ENCODE measurements at regions of chr5 and their contacts with region 1.

Region 1: GRCh38 chr5:139711067-139711905 is 63.1 kb downstream of the CXXC5 start:
- DNase-seq: peak; percentile 82
- H3K4me3 ChIP-seq: peak overlapping the region; percentile 55 to 67
- H3K27ac ChIP-seq: peak overlapping the region; percentile 95 to 99
- H3K4me1 ChIP-seq: peaks cover 21 to 48% of the 10 kb centered on the region in 2 experiments
- H3K27me3 ChIP-seq: no peaks in the 10 kb centered on the region
- CTCF ChIP-seq: peak; percentile 38
- EP300 ChIP-seq: peak in 1 of 2 experiments; percentile 29; a peak in 1 of 4 replicates
- RAD21 ChIP-seq: peak; percentile 8; the same call in 1 of the 2 replicates

Region 2: DNA sequence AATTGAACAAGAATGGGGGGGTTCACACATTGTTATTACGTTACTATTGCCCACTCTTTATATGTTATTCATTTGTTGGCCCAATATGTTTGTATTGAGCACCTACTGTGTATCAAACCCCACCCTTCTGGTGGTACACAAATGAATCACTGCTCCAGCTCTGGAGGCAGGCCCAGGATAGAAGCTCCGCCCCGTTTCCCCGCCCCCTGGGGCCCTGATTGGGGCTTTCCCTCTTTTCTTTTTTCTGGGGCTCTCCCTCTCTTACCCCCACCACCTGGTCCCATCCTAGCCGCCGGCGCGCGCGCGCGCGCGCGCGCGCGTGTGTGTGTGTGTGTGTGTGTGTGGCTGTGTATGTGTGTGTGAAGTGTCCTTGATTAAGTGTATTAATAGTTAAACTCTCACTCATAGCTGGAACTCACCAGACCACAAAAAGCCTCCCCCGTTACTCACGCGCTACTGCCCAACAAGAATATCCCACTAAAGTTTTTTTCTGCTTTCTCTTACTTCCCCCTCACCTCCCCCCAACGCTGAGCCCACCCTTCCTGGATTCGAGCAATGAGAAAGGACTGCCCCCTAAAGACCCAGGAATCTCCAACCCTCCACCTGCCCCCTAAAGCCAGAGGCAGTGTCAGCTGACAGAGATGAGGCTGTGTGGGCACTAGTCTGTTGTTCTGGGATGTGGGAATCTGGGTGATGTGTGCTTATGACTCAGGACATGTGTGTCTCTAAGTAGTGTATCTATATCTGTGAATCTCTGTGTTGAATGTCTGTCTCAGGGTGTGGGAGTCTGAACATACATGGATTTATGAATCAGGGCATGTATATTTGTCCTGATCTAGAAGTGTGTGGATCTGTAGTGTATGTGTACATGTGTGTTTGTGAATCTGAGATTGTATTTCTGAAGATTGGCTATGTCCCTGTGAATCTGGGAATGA is 59.2 kb before region 1 on chr5:
- CTCF ChIA-PET with region 1: interaction called, 32 read pairs
- POLR2A ChIA-PET with region 1: interaction called, 32 read pairs
- DNase-seq: peak; percentile 89
- H3K4me3 ChIP-seq: peak overlapping the region; percentile 19 to 91; a peak in 3 of 4 replicates
- H3K27ac ChIP-seq: peak overlapping the region; percentile 78 to 96
- H3K4me1 ChIP-seq: peaks cover 54 to 66% of the 10 kb centered on the region in 2 experiments
- H3K27me3 ChIP-seq: no peaks in the 10 kb centered on the region
- CTCF ChIP-seq: no peak
- EP300 ChIP-seq: 0 out of 4 replicates have a peak, but pooled peaks of 1 of the 2 experiments have one; percentile 10
- RAD21 ChIP-seq: no peak

Region 3: GRCh38 chr5:139670369-139671095 is 40.8 kb before region 1 on chr5:
- CTCF ChIA-PET with region 1: interaction called, 10 read pairs
- POLR2A ChIA-PET with region 1: interaction called, 22 read pairs
- DNase-seq: peak; percentile 59
- H3K4me3 ChIP-seq: no peak overlapping the region
- H3K27ac ChIP-seq: peak overlapping the region; percentile 26 to 99; a peak in 3 of 4 replicates
- H3K4me1 ChIP-seq: peaks cover 56 to 92% of the 10 kb centered on the region in 2 experiments
- H3K27me3 ChIP-seq: no peaks in the 10 kb centered on the region
- CTCF ChIP-seq: peak; percentile 43
- EP300 ChIP-seq: no peak
- RAD21 ChIP-seq: peak; percentile 32; the same call in 1 of the 2 replicates

Region 4: GRCh38 chr5:139684881-139685749 is 26.2 kb before region 1 on chr5:
- CTCF ChIA-PET with region 1: interaction called, 31 read pairs
- POLR2A ChIA-PET with region 1: interaction called, 4 read pairs
- DNase-seq: peak; percentile 76
- H3K4me3 ChIP-seq: no peak overlapping the region
- H3K27ac ChIP-seq: peak overlapping the region in 1 of 2 experiments; percentile 48; a peak in 1 of 4 replicates
- H3K4me1 ChIP-seq: peaks cover 18 to 59% of the 10 kb centered on the region in 2 experiments
- H3K27me3 ChIP-seq: no peaks in the 10 kb centered on the region
- CTCF ChIP-seq: peak; percentile 34
- EP300 ChIP-seq: no peak
- RAD21 ChIP-seq: peak; percentile 31

Region 5: GRCh38 chr5:139696894-139697658 is 14.2 kb before region 1 on chr5:
- CTCF ChIA-PET with region 1: interaction called, 16 read pairs
- POLR2A ChIA-PET with region 1: interaction called, 11 read pairs
- DNase-seq: peak; percentile 82
- H3K4me3 ChIP-seq: peak overlapping the region in 1 of 2 experiments; percentile 30; a peak in 2 of 4 replicates
- H3K27ac ChIP-seq: peak overlapping the region; percentile 87 to 97
- H3K4me1 ChIP-seq: peaks cover 41 to 58% of the 10 kb centered on the region in 2 experiments; a peak in 3 of 4 replicates
- H3K27me3 ChIP-seq: no peaks in the 10 kb centered on the region
- CTCF ChIP-seq: no peak
- EP300 ChIP-seq: peak in 1 of 2 experiments; percentile 84; a peak in 1 of 4 replicates
- RAD21 ChIP-seq: no peak

Region 6: GRCh38 chr5:139740138-139740991 is 29.1 kb after region 1 on chr5:
- CTCF ChIA-PET with region 1: interaction called, 12 read pairs
- POLR2A ChIA-PET with region 1: interaction called, 3 read pairs
- DNase-seq: no peak
- H3K4me3 ChIP-seq: no peak overlapping the region
- H3K27ac ChIP-seq: no peak overlapping the region
- H3K4me1 ChIP-seq: peaks cover 10 to 16% of the 10 kb centered on the region in 2 experiments; a peak in 2 of 4 replicates
- H3K27me3 ChIP-seq: no peaks in the 10 kb centered on the region
- CTCF ChIP-seq: no peak
- EP300 ChIP-seq: no peak
- RAD21 ChIP-seq: no peak

Region 7: GRCh38 chr5:139765409-139766217 is 54.3 kb after region 1 on chr5:
- CTCF ChIA-PET with region 1: interaction called, 46 read pairs
- POLR2A ChIA-PET with region 1: interaction called, 5 read pairs
- DNase-seq: peak; percentile 93
- H3K4me3 ChIP-seq: peak overlapping the region; percentile 56 to 85
- H3K27ac ChIP-seq: peak overlapping the region in 1 of 2 experiments; percentile 56; a peak in 1 of 4 replicates
- H3K4me1 ChIP-seq: peaks cover 2 to 29% of the 10 kb centered on the region in 2 experiments; a peak in 3 of 4 replicates
- H3K27me3 ChIP-seq: no peaks in the 10 kb centered on the region
- CTCF ChIP-seq: peak; percentile 97
- EP300 ChIP-seq: peak in 1 of 2 experiments; percentile 14; a peak in 1 of 4 replicates
- RAD21 ChIP-seq: peak; percentile 73